GM12878 (cell line): ENCODE measurements at regions of chr12 and their contacts with region 1.

Region 1: GRCh38 chr12:103441437-103442181 is 54.2 kb downstream of the C12orf42 start:
- DNase-seq: peak; percentile 97
- ATAC-seq: peak; percentile 98
- H3K4me3 ChIP-seq: peak overlapping the region; percentile 58
- H3K27ac ChIP-seq: peak overlapping the region; percentile 71
- H3K4me1 ChIP-seq: peaks cover 22% of the 10 kb centered on the region
- H3K27me3 ChIP-seq: no peaks in the 10 kb centered on the region
- CTCF ChIP-seq: peak in 2 of 3 experiments; percentile 11 to 28; a peak in 1 of 6 replicates
- EP300 ChIP-seq: peak; percentile 72 to 96; a peak in 3 of 4 replicates
- POLR2A ChIP-seq: peak; percentile 64
- RAD21 ChIP-seq: peak; percentile 55

Region 2: DNA sequence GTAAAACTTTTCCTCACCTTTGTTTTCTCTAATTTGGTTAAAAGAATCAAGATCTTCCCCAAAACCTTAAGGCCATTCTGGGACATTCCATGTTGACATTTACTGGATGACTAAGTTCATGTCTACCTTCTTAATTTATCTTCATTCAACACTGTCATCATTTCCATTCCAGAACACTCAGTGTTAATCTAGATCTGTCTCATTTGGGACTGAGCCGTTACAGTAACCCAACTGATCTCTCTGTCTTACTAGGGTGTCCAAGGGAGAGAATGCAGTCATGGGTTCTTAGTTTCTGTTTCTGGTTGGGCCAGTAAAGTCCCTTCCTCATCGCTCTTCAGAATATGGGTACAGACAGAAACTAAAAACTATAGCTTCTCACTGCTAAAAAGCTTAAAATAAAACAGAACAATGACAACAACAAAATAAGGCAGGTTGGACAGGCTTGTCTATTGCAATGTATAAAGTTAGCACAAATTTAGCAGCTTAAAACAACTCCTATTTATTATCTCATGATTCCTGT is 339.3 kb before region 1 on chr12:
- CTCF ChIA-PET with region 1: no interaction called
- POLR2A ChIA-PET with region 1: no interaction called
- RAD21 ChIA-PET with region 1: interaction called, 3 read pairs
- SMC1A ChIA-PET with region 1: interaction called, 4 read pairs
- in situ Hi-C with region 1: no loop called
- intact Hi-C with region 1: loop called (anchors 2 kb)
- DNase-seq: peak; percentile 72
- ATAC-seq: peak; percentile 91
- H3K4me3 ChIP-seq: no peak overlapping the region
- H3K27ac ChIP-seq: peak overlapping the region; percentile 82
- H3K4me1 ChIP-seq: peaks cover 29% of the 10 kb centered on the region
- H3K27me3 ChIP-seq: no peaks in the 10 kb centered on the region
- CTCF ChIP-seq: no peak
- EP300 ChIP-seq: peak; percentile 73 to 89; a peak in 3 of 4 replicates
- POLR2A ChIP-seq: no peak
- RAD21 ChIP-seq: peak; percentile 22; the same call in 1 of the 2 replicates

Region 3: DNA sequence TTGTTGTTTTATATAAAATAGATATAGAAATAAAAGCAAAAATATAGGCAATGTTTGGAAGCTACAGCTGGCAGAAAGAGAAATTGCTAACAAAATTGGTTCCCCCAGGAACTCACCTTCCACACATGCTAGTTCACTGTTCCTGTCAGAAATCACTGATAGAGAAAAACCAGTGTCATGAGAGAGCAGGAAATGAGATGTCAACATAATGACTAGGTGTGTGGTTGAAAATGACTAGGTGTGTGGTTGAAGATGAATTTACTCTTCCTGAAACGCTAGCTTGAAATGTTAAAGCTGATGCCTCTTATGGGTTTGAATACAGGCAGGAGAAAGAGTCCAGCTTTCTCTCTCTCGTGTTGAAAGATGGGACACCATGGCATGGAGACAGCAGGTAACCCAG is 162.2 kb before region 1 on chr12:
- CTCF ChIA-PET with region 1: interaction called, 3 read pairs
- POLR2A ChIA-PET with region 1: no interaction called
- RAD21 ChIA-PET with region 1: no interaction called
- SMC1A ChIA-PET with region 1: interaction called, 6 read pairs
- in situ Hi-C with region 1: no loop called
- intact Hi-C with region 1: loop called (anchors 2 kb)
- DNase-seq: peak; percentile 93
- ATAC-seq: peak; percentile 94
- H3K4me3 ChIP-seq: no peak overlapping the region
- H3K27ac ChIP-seq: peak overlapping the region; percentile 53; the same call in 1 of the 2 replicates
- H3K4me1 ChIP-seq: peaks cover 21% of the 10 kb centered on the region
- H3K27me3 ChIP-seq: no peaks in the 10 kb centered on the region
- CTCF ChIP-seq: no peak
- EP300 ChIP-seq: peak; percentile 83 to 93
- POLR2A ChIP-seq: no peak
- RAD21 ChIP-seq: 0 out of 2 replicates have a peak, but pooled peaks have one; percentile 8

Region 4: DNA sequence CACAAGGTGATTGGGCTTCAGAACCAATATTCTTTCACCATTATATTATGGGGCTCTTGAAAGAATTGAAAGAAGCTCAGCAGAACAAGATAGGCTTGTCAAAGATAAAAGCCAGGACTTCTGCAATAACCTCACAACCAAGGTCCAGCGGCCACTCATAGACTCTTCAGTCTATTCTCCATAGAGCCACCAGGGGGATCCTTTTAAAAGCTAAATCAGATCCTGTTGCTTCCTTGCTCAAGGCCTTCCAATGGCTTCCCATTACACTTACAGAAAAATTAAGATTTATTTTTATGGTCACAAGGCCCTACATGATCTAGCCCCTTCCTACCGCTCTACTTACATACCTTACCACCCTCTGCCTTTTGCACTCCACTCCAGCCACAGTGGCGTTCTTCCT is 115.4 kb before region 1 on chr12:
- CTCF ChIA-PET with region 1: no interaction called
- POLR2A ChIA-PET with region 1: no interaction called
- RAD21 ChIA-PET with region 1: no interaction called
- SMC1A ChIA-PET with region 1: no interaction called
- in situ Hi-C with region 1: no loop called
- intact Hi-C with region 1: no loop called
- DNase-seq: no peak
- ATAC-seq: peak; percentile 65
- H3K4me3 ChIP-seq: no peak overlapping the region
- H3K27ac ChIP-seq: no peak overlapping the region
- H3K4me1 ChIP-seq: no peaks in the 10 kb centered on the region
- H3K27me3 ChIP-seq: no peaks in the 10 kb centered on the region
- CTCF ChIP-seq: peak; percentile 26 to 42 (median 31); a peak in 4 of 6 replicates
- EP300 ChIP-seq: no peak
- POLR2A ChIP-seq: no peak
- RAD21 ChIP-seq: peak; percentile 70

Region 5: DNA sequence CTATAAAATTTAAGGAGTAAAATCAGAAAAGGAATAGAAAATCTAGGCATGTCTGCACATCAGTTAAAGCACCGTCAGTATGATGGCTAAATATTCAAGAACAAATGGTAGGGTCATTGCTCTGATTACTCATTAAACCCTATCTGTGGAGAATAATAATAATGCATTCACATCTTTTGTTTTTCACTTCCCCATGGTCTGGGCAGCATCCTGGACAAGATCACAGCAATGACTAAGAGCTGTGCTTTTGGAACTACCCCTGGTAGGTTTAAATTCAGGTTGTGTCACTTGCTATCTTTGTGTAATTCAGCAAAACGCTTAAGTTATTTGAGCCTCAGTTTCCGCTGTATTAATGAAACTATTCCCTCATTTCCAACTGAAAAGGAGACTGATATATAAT is 21.1 kb after region 1 on chr12:
- CTCF ChIA-PET with region 1: interaction called, 8 read pairs
- POLR2A ChIA-PET with region 1: no interaction called
- RAD21 ChIA-PET with region 1: interaction called, 24 read pairs
- SMC1A ChIA-PET with region 1: interaction called, 20 read pairs
- in situ Hi-C with region 1: no loop called
- intact Hi-C with region 1: no loop called
- DNase-seq: peak; percentile 83
- ATAC-seq: peak; percentile 99
- H3K4me3 ChIP-seq: no peak overlapping the region
- H3K27ac ChIP-seq: peak overlapping the region; percentile 21; the same call in 1 of the 2 replicates
- H3K4me1 ChIP-seq: peaks cover 13% of the 10 kb centered on the region
- H3K27me3 ChIP-seq: no peaks in the 10 kb centered on the region
- CTCF ChIP-seq: no peak
- EP300 ChIP-seq: peak; percentile 48 to 93; a peak in 3 of 4 replicates
- POLR2A ChIP-seq: no peak
- RAD21 ChIP-seq: no peak

Region 6: DNA sequence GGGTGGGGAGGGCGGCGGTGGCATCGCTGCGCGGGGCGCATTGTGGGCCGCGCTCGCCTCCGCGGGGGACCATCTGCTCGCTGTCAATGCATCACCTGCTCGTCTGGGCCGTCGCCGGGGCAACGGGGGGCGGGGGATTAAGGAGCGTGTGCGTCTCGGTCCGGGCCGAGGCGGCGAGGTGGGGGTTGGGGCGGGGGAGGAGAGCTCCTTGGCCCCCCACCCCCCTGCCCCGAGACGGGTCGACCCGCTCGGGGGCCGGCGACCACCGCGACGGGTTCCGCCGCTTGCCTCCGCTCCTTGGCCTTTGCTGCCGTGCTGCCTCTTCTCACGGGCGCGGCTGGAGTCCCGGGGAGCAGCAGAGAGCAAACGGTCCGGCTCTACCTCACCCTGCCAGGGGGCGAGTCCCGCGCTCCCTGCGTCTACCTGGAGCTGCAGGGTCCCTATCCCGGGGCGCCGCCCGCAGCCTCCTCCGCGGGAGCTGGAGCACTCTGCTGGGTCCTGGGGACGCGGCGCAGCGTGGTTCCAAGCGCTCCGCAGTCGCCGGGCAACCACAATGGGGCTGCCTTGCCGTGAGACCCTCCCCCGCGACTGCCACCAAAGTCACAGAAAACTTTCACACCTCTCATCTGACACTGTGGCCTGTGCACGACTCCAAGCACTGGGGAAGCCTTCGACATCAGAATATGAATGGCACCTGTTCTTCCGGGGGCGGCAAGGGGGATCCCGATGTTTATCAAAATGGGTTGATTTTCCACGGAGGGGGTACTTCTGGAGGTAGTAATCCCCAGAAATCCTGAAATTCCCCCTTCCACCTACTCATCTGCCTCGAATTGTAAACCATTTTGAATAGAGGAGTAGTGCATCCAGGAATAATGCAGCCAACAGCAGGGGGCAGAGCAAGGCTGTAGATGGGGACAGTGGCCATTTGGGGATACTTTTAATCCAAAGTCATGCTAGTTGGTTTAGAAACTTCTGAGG is 54.2 kb after region 1 on chr12 and contains the start of gene C12orf42:
- CTCF ChIA-PET with region 1: interaction called, 6 read pairs
- POLR2A ChIA-PET with region 1: no interaction called
- RAD21 ChIA-PET with region 1: interaction called, 10 read pairs
- SMC1A ChIA-PET with region 1: interaction called, 13 read pairs
- in situ Hi-C with region 1: no loop called
- intact Hi-C with region 1: no loop called
- DNase-seq: peak; percentile 63
- ATAC-seq: peak; percentile 88
- H3K4me3 ChIP-seq: peak within 1 kb of the TSS; percentile 72
- H3K27ac ChIP-seq: 0 out of 2 replicates have a peak within 1 kb of the TSS, but pooled peaks have one; percentile 12
- H3K4me1 ChIP-seq: peaks cover 8% of the 10 kb centered on the region; the same call in 1 of the 2 replicates
- H3K27me3 ChIP-seq: no peaks in the 10 kb centered on the region
- CTCF ChIP-seq: peak; percentile 70 to 85 (median 71)
- EP300 ChIP-seq: peak in 1 of 2 experiments; percentile 42; a peak in 1 of 4 replicates
- POLR2A ChIP-seq: no peak
- RAD21 ChIP-seq: peak; percentile 81
- polyA plus RNA-seq, gene C12orf42: 1.8 to 1.9 TPM